ENCODE measurements at regions of chr11 and their contacts with region 1.

Region 1: DNA sequence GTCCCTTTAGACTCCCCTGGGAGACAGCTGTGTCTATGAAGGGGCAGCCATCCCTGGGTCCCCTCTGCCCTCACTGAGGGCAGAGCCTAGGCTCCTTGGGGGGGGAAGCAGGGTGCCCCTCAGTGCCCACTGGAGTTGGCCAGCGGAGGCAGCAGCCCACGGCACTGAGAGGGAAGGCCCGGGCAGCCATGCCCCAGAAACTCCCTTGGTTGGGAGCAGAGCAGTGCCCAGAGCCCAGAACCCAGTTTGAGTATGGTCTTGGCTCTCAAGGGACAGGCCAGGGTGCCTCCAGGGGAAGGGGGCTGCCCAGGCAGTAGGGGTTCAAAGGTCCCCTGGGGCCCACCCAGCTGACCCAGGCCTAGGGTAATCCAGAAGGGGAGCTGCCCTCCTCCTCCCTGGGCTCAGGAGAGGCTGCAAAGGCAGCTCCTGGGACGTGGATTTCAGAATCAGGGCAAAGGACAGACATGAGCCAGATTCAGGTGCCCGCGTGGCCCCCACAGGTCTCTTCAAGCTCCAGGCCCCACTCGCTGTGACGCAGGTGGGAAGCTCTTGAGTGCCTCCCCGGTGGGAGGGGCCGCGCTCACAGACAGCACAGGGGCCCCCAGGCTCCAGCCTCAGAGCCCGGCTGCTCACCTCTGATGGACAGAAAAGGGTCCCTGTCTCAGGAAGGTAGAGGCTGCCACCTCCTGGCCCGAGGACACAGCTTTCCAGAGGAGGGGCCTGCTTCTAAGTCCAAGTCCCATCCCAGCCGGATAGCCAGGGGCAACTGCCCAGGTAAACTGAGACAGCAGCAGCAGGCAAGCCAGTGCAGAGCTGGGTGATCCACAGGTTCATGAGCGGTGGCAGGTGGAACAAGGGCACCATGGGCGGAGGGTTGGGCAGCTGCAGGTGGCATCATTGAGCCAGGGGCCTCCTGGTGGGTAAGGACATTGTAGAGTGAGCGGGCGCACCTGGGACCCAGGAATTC is 2.6 kb downstream of the C11orf21 start:
- DNase-seq: peak; percentile 21
- H3K4me3 ChIP-seq: no peak overlapping the region
- H3K27ac ChIP-seq: no peak overlapping the region
- H3K4me1 ChIP-seq: no peaks in the 10 kb centered on the region
- H3K27me3 ChIP-seq: no peaks in the 10 kb centered on the region
- CTCF ChIP-seq: peak; percentile 32 to 82

Region 2: GRCh38 chr11:2166091-2166851 is 132.8 kb before region 1 on chr11:
- CTCF ChIA-PET with region 1: no interaction called
- dilution Hi-C with region 1: no loop called
- in situ Hi-C with region 1: no loop called
- intact Hi-C with region 1: loop called (anchors 1 kb)
- DNase-seq: peak; percentile 23
- H3K4me3 ChIP-seq: peak overlapping the region in 2 of 3 experiments; percentile 18 to 24
- H3K27ac ChIP-seq: no peak overlapping the region
- H3K4me1 ChIP-seq: peaks cover 3% of the 10 kb centered on the region
- H3K27me3 ChIP-seq: peaks cover 4% of the 10 kb centered on the region
- CTCF ChIP-seq: peak; percentile 28 to 67

Region 3: DNA sequence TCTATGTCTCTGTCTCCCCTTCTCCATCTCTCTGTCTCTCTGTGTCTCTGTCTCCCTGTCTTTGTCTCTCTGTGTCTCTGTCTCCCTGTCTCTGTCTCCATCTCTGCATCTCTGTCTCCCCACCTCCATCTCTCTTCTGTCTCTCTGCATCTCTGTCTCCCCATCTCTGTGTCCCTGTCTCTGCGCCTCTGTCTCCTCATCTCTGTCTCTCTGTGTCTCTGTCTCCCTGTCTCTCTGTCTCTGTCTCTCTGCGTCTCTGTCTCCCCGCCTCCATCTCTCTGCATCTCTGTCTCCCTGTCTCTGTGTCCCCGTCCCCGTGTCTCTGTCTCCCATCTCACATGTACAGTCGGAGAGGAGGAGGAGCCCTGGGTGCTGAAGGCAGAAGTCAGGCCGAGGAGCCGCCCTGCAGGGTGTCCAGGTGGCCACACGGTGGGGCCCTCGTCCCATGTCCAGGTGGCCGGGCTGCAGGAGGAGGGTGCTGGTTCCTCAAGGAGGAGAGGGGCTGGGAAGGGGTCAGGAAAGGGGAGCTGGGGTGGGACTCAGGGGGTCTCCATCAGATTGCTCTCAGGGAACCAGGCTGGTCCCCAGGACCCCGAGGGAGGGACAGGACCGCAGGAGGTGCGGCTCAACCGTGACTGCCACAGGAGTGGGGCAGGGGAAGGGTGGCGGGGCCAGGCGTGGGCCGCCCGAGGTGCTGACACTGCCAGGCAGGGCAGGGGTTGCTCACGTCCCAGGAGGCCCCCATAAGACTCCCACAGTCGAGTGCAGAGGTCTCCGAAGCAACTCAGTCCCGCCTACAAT is 101.9 kb before region 1 on chr11:
- CTCF ChIA-PET with region 1: no interaction called
- dilution Hi-C with region 1: no loop called
- in situ Hi-C with region 1: loop called (anchors 5 to 10 kb)
- intact Hi-C with region 1: loop called (anchors 1 kb)
- DNase-seq: peak; percentile 36
- H3K4me3 ChIP-seq: no peak overlapping the region
- H3K27ac ChIP-seq: no peak overlapping the region
- H3K4me1 ChIP-seq: peaks cover 3% of the 10 kb centered on the region
- H3K27me3 ChIP-seq: no peaks in the 10 kb centered on the region
- CTCF ChIP-seq: peak; percentile 92 to 98

Region 4: DNA sequence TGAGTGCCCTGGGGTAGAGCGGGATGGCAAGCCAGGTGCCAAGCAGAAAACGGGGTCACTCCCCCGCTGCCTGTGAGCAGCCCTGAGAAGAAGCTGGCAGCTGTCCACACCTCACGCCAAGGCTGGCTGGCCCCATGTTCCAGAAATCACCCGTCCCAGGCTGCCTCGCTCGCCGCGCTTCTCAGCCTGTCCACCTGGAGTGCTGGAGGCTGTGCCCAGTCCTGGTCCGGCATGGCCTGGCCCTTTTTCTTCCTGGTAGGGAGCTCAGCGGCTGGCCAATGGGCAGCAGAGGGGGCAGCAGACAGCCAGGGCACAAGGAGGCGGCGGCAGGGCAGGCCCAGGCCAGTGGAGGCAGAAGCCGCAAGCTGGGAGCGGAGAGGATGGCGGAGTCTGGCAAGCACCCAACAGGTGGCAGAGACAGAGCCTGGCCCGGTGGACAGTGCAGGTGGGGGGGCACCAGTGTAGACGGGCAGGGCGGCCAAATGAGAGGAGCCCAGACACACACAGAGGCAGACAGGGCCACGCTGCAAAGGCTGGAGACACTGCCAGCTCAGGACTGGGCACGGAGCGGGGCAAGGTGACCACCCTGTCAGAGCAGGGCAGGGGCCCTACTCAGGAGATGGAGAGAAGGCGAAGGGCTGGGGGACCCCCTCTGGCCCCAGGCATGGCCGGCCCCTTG is 90.2 kb before region 1 on chr11:
- CTCF ChIA-PET with region 1: no interaction called
- dilution Hi-C with region 1: loop called (anchors 5 kb)
- in situ Hi-C with region 1: loop called in 1 of 2 experiments (anchors 5 kb)
- intact Hi-C with region 1: no loop called
- DNase-seq: peak; percentile 48
- H3K4me3 ChIP-seq: no peak overlapping the region
- H3K27ac ChIP-seq: no peak overlapping the region
- H3K4me1 ChIP-seq: peaks cover 18% of the 10 kb centered on the region
- H3K27me3 ChIP-seq: peaks cover 2% of the 10 kb centered on the region
- CTCF ChIP-seq: peak in 1 of 2 donors; percentile 41

Region 5: GRCh38 chr11:2409611-2410468 is 110.8 kb after region 1 on chr11:
- CTCF ChIA-PET with region 1: no interaction called
- dilution Hi-C with region 1: loop called (anchors 5 kb)
- in situ Hi-C with region 1: loop called in 1 of 2 experiments (anchors 25 kb)
- intact Hi-C with region 1: no loop called
- DNase-seq: no peak
- H3K4me3 ChIP-seq: no peak overlapping the region
- H3K27ac ChIP-seq: no peak overlapping the region
- H3K4me1 ChIP-seq: no peaks in the 10 kb centered on the region
- H3K27me3 ChIP-seq: no peaks in the 10 kb centered on the region
- CTCF ChIP-seq: no peak

Region 6: DNA sequence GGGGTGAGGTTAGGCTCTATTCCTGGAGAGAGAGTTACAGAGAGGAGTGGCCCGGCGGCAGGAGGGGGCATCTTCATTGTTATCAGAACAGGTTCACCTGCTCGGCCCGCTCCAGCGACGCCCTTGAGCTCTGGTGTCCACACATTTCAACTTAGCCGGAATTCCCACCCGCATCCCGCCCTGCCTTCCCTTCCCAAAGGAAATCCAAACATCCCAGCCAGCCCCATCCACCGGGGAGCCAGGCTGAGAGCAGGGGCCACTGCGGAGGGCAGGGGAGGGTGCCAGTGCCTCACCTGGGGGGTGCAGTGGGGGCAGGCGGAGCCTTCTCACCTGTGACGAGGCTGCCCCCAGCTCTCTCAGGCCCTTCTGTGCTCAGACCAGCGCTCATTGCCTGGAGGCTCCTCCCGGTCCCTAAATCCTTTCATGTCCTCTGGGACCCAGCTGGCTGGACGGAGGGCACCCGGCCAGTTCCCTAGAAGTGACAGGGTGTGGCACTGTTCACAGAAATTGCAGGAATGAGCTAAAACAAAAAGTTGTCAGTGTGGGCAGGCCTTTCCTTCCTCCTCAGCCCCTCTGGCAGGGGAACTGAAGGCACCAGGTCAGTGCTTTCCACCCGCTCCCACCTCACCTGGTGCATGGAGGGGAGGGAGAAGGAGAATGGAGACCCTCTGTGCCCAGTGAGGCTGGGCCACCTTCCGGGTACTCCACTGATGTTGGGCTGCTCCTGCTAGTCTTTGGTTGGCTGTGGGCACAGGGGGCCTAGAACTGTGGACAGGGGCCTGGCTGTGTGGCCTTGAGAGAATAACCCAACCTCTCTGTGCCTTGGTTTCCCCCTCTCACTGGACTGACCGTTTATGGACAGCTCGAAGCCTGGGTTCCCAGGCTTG is 921.7 kb after region 1 on chr11:
- CTCF ChIA-PET with region 1: no interaction called
- dilution Hi-C with region 1: no loop called
- in situ Hi-C with region 1: no loop called
- intact Hi-C with region 1: no loop called
- DNase-seq: no peak
- H3K4me3 ChIP-seq: no peak overlapping the region
- H3K27ac ChIP-seq: no peak overlapping the region
- H3K4me1 ChIP-seq: no peaks in the 10 kb centered on the region
- H3K27me3 ChIP-seq: peaks cover 3% of the 10 kb centered on the region
- CTCF ChIP-seq: no peak